Activated T-helper 1 cell treated with anti-CD3 and anti-CD28 coated beads, Interleukin-12 subunit alpha, Interleukin-12 subunit beta, Interleukin-2, Interleukin-4 antibody, amounts not matched to agents 30 ng/mL and 10 ng/mL and 1 ng/mL, durations not matched to agents 14 hours and 24 hours and 36 hours (primary cell): ENCODE measurements at regions of chr12 and their contacts with region 1.

Region 1: DNA sequence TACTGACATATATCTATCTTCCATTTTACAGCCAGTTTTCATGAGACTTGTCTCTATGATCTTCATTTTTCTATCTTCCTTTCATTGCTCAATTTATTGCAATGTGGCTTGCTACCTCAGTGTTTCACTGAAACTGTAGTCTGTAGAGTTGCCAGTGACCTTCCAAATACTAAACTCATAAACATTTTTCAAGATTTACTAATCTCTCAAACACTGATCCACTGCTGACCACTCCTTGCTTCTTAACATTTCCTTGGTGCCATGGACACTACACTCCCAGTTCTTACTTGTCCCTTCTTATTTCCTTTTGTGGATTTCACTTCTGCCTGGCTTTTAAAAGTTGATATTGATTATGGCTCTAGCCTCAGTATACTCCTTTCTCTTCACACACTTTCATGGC is 95.4 kb upstream of the SLCO1C1 start:
- DNase-seq: no peak
- H3K4me3 Mint-ChIP-seq: no peak overlapping the region
- H3K27ac Mint-ChIP-seq: no peak overlapping the region
- H3K4me1 Mint-ChIP-seq: no peaks in the 10 kb centered on the region
- H3K27me3 Mint-ChIP-seq: no peaks in the 10 kb centered on the region

Region 2: DNA sequence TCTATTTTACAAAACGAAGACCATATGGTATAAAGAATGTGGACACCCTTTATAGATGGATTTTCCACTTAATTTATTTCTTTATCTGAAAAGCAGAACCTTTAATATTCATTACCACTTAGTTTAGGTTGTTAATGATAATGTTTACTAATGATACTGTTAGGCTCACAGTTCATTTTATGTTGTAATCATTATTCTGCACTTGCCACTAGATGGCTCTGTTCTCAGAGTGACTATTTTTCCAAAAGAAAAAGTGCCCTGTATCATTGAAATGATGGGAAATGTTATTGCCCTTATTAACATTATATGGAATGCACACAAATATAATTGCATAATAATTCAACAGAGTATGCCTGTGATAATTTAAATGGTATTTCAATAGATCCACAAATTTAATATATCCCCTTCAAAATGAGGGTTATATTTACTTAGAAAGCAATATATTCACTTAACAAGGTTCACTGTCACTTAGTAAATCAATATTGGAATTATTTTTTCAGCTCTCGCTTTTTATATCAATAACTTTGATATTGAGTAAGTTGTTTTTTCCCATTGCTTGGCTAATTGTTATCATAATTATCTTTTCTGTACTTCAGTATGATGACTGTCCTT is 135.7 kb before region 1 on chr12:
- intact Hi-C with region 1: loop called (anchors 1 kb)
- DNase-seq: no peak
- H3K4me3 Mint-ChIP-seq: no peak overlapping the region
- H3K27ac Mint-ChIP-seq: no peak overlapping the region
- H3K4me1 Mint-ChIP-seq: no peaks in the 10 kb centered on the region
- H3K27me3 Mint-ChIP-seq: no peaks in the 10 kb centered on the region

Region 3: DNA sequence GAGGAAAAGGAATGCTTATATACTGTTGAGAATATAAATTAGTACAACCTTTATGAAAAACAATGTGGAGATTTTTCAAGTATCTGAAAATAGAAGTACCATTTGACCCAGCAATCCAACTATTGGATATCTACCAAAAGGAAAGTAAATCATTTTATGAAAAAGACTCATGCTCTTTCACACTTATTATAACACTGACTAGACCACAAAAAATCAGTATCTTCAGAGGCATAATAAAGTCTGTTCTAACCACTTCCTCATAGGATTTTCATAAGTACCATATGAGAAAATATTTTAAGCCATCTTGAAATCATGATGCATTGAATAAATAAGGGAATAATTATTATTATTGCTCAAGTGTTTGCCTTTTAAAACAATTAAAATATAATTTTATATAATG is 622.0 kb after region 1 on chr12:
- intact Hi-C with region 1: no loop called
- DNase-seq: no peak
- H3K4me3 Mint-ChIP-seq: no peak overlapping the region
- H3K27ac Mint-ChIP-seq: no peak overlapping the region
- H3K4me1 Mint-ChIP-seq: no peaks in the 10 kb centered on the region
- H3K27me3 Mint-ChIP-seq: no peaks in the 10 kb centered on the region